A549 (cell line): ENCODE measurements at regions of chr1 and their contacts with region 1.

Region 1: GRCh38 chr1:109499661-109500536 is 6.0 kb downstream of the CYB561D1 start:
- DNase-seq: peak in 1 of 2 experiments; percentile 56
- ATAC-seq: peak; percentile 80
- H3K4me3 ChIP-seq: no peak overlapping the region
- H3K27ac ChIP-seq: no peak overlapping the region
- H3K4me1 ChIP-seq: peaks cover 3% of the 10 kb centered on the region; the same call in 1 of the 3 replicates
- CTCF ChIP-seq: peak; percentile 27; the same call in 2 of the 3 replicates
- EP300 ChIP-seq: no peak
- POLR2A ChIP-seq: no peak
- RAD21 ChIP-seq: peak in 1 of 2 experiments; percentile 30; a peak in 2 of 5 replicates

Region 2: GRCh38 chr1:109438798-109439297 is 61.1 kb before region 1 on chr1:
- CTCF ChIA-PET with region 1: no interaction called
- POLR2A ChIA-PET with region 1: no interaction called
- DNase-seq: peak in 1 of 2 experiments; percentile 20
- ATAC-seq: peak in 1 of 2 experiments; percentile 35; a peak in 1 of 6 replicates
- H3K4me3 ChIP-seq: no peak overlapping the region
- H3K27ac ChIP-seq: no peak overlapping the region
- H3K4me1 ChIP-seq: no peaks in the 10 kb centered on the region
- CTCF ChIP-seq: no peak
- EP300 ChIP-seq: no peak
- POLR2A ChIP-seq: no peak
- RAD21 ChIP-seq: no peak

Region 3: GRCh38 chr1:109483672-109484518 is 16.0 kb before region 1 on chr1 and contains the start of gene ATXN7L2:
- CTCF ChIA-PET with region 1: interaction called, 33 read pairs
- POLR2A ChIA-PET with region 1: no interaction called
- DNase-seq: peak; percentile 85 to 92
- ATAC-seq: peak; percentile 80 to 82
- H3K4me3 ChIP-seq: peak within 1 kb of the TSS; percentile 60
- H3K27ac ChIP-seq: peak within 1 kb of the TSS; percentile 96 to 99
- H3K4me1 ChIP-seq: peaks cover 6% of the 10 kb centered on the region; the same call in 2 of the 3 replicates
- CTCF ChIP-seq: no peak
- EP300 ChIP-seq: no peak
- POLR2A ChIP-seq: peak; percentile 92
- RAD21 ChIP-seq: no peak
- polyA plus RNA-seq, gene ATXN7L2: 0.97 and 1.2 TPM in 2 replicates

Region 4: GRCh38 chr1:109516872-109517271 is 17.0 kb after region 1 on chr1:
- CTCF ChIA-PET with region 1: interaction called, 749 read pairs
- POLR2A ChIA-PET with region 1: no interaction called
- DNase-seq: no peak
- ATAC-seq: peak in 1 of 2 experiments; percentile 21; a peak in 2 of 6 replicates
- H3K4me3 ChIP-seq: no peak overlapping the region
- H3K27ac ChIP-seq: no peak overlapping the region
- H3K4me1 ChIP-seq: no peaks in the 10 kb centered on the region
- CTCF ChIP-seq: no peak
- EP300 ChIP-seq: no peak
- POLR2A ChIP-seq: no peak
- RAD21 ChIP-seq: no peak